ENCODE measurements at regions of chr13 and their contacts with region 1.

Region 1: DNA sequence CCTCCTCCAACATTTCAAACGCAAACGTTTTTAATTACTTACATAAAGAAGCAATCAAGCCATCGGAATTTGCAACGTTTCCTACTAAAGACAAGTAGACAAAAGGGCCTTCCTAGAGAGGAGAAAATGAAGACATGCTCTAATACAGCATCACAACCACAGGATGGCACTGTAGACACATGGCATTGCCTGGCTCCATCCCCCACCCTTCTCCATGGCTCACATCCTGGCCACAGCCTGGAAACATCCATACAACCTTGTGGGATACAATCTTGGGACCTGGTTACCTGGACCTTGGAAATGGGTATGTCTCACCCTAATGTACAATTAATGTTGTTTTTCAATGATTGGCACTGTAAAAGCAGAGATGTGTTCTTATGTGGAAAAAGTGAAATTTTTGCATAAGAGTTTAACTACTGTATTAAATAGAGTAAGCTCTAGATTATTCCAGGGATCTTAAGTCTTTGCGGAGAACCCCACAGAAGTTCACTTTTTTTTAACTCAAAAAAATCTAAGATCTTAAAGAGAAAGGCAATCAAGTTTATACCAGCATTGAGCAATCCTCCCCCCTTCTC is 21.5 kb downstream of the EBPL start:
- DNase-seq: no peak
- H3K4me3 ChIP-seq: no peak overlapping the region
- CTCF ChIP-seq: peak; percentile 87

Region 2: DNA sequence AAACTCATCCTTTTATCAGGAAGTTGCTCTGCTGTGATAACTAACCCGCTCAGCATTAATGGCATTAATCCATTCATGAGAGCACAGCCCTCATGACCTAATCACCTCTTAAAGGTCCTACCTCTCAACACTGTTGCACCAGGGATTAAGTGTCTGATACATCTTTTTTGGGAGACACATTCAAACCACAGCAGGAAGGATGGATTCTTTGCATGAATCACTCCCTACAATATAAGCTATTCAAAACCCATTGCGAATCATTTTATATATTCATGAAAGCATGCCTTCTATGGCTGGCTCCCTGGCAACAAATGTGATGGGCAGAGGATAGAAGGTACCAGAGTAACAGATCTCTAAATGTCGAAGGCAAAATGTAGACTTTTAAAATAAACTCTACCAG is 13.9 kb before region 1 on chr13:
- CTCF ChIA-PET with region 1: interaction called, 13 read pairs
- POLR2A ChIA-PET with region 1: no interaction called
- DNase-seq: no peak
- H3K4me3 ChIP-seq: no peak overlapping the region
- CTCF ChIP-seq: no peak

Region 3: DNA sequence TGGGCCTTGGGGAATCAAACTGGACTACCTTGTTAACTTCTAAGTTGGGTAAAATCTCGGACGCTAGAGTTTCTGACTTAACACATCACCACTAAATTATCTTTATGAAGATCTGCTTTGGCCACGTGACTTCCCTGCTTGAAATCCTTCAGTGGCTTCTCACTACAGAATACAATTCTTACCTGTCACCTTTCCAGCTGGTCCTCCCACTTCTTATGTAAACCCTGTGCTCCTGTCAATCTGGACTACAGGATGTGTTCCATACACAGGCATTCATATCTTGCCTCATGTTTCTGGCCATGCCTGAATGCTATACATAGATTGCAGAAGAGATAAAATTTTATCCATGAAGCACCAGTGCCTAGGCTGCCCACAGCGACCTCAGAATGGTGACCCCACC is 18.0 kb after region 1 on chr13:
- CTCF ChIA-PET with region 1: interaction called, 16 read pairs
- POLR2A ChIA-PET with region 1: no interaction called
- DNase-seq: no peak
- H3K4me3 ChIP-seq: no peak overlapping the region
- CTCF ChIP-seq: no peak

Region 4: DNA sequence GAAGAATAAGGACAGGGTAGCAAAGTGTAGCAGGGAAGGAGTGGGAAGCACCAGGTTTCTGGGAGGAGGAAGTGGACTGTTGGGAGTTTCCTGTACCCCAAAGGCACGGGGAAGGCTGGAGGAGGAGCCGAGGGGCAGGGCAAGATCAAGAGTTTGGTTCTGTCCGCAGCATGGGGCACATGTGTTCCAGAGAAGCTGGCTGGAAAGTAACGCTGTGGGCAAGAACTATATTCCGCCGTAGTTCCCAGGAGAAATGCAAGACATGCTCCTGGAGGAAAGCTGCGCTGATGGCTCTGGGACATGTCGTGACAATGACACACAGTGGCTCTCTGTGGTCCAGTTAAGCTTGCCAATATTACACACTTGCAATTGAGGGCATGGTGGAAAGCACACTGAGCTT is 174.4 kb after region 1 on chr13:
- CTCF ChIA-PET with region 1: interaction called, 22 read pairs
- POLR2A ChIA-PET with region 1: no interaction called
- DNase-seq: no peak
- H3K4me3 ChIP-seq: no peak overlapping the region
- CTCF ChIP-seq: no peak

Measured in AG04449 (cell line).